ENCODE measurements at regions of chr9 and their contacts with region 1.

Region 1: GRCh38 chr9:38178237-38178636 is 109.2 kb upstream of the SHB start:
- DNase-seq: no peak
- ATAC-seq: no peak
- H3K4me3 ChIP-seq: no peak overlapping the region
- H3K27ac ChIP-seq: no peak overlapping the region
- H3K4me1 ChIP-seq: peaks cover 0 to 3% (median 0%) of the 10 kb centered on the region in 12 donors
- H3K27me3 ChIP-seq: no peaks in the 10 kb centered on the region
- CTCF ChIP-seq: no peak
- POLR2A ChIP-seq: no peak

Region 2: GRCh38 chr9:37876376-37876775 is 301.9 kb before region 1 on chr9:
- intact Hi-C with region 1: loop called in 1 of 10 experiments (anchors 10 kb)
- DNase-seq: no peak
- ATAC-seq: no peak
- H3K4me3 ChIP-seq: no peak overlapping the region
- H3K27ac ChIP-seq: no peak overlapping the region
- H3K4me1 ChIP-seq: peaks cover 0 to 6% (median 0%) of the 10 kb centered on the region in 12 donors
- H3K27me3 ChIP-seq: no peaks in the 10 kb centered on the region
- CTCF ChIP-seq: no peak
- POLR2A ChIP-seq: no peak

Region 3: GRCh38 chr9:38117651-38118050 is 60.6 kb before region 1 on chr9:
- intact Hi-C with region 1: no loop called
- DNase-seq: no peak
- ATAC-seq: no peak
- H3K4me3 ChIP-seq: no peak overlapping the region
- H3K27ac ChIP-seq: no peak overlapping the region
- H3K4me1 ChIP-seq: no peaks in the 10 kb centered on the region
- H3K27me3 ChIP-seq: peaks cover 0 to 9% (median 0%) of the 10 kb centered on the region in 9 donors
- CTCF ChIP-seq: no peak
- POLR2A ChIP-seq: no peak